Vagina (tissue), 2 donors: ENCODE measurements at regions of chr7 and their contacts with region 1.

Region 1: GRCh38 chr7:19648791-19649190 is 60.0 kb downstream of the POLR1F start:
- DNase-seq: no peak
- H3K4me3 ChIP-seq: no peak overlapping the region
- H3K27ac ChIP-seq: no peak overlapping the region
- H3K4me1 ChIP-seq: no peaks in the 10 kb centered on the region
- H3K27me3 ChIP-seq: no peaks in the 10 kb centered on the region
- CTCF ChIP-seq: no peak
- POLR2A ChIP-seq: no peak

Region 2: DNA sequence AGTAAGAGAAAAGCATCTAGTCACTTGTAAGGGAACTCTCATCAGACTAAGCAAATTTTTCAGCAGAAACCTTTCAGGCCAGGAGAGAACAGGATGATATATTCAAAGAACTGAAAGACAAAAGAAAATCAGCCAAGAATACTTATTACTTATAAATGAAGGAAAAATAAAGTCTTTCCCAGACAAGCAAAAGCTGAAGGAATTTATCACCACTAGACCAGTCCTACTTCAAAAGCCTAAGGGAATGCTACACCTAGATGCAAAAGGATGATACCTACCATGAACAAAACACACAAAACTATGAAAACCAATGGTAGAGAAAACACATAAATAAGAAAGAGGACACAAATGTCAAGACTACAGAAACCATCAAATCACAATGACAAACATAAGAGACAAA is 840.1 kb after region 1 on chr7:
- intact Hi-C with region 1: loop called (anchors 5 kb)
- DNase-seq: no peak
- H3K4me3 ChIP-seq: no peak overlapping the region
- H3K27ac ChIP-seq: no peak overlapping the region
- H3K4me1 ChIP-seq: no peaks in the 10 kb centered on the region
- H3K27me3 ChIP-seq: no peaks in the 10 kb centered on the region
- CTCF ChIP-seq: no peak
- POLR2A ChIP-seq: no peak